Activated T-helper 2 cell treated with anti-CD3 and anti-CD28 coated beads, Interferon-gamma antibody, Interleukin-2, Interleukin-4, amounts not matched to agents 10 μg/mL and 5 μg/mL and 100 μg/mL, durations not matched to agents 14 hours and 24 hours and 36 hours (primary cell): ENCODE measurements at regions of chr6 and their contacts with region 1.

Region 1: GRCh38 chr6:137866914-137867684 is at the start of gene TNFAIP3:
- DNase-seq: peak; percentile 94
- H3K4me3 Mint-ChIP-seq: peak within 1 kb of the TSS; percentile 96
- H3K27ac Mint-ChIP-seq: peak within 1 kb of the TSS; percentile 96
- H3K4me1 Mint-ChIP-seq: peaks cover 38% of the 10 kb centered on the region
- H3K27me3 Mint-ChIP-seq: no peaks in the 10 kb centered on the region
- total RNA-seq, gene TNFAIP3: 250 and 251 TPM in 2 replicates

Region 2: GRCh38 chr6:137799950-137800568 is 67.0 kb before region 1 on chr6:
- intact Hi-C with region 1: loop called (anchors 1 kb)
- DNase-seq: no peak
- H3K4me3 Mint-ChIP-seq: no peak overlapping the region
- H3K27ac Mint-ChIP-seq: peak overlapping the region; percentile 76
- H3K4me1 Mint-ChIP-seq: peaks cover 65% of the 10 kb centered on the region
- H3K27me3 Mint-ChIP-seq: no peaks in the 10 kb centered on the region

Region 3: DNA sequence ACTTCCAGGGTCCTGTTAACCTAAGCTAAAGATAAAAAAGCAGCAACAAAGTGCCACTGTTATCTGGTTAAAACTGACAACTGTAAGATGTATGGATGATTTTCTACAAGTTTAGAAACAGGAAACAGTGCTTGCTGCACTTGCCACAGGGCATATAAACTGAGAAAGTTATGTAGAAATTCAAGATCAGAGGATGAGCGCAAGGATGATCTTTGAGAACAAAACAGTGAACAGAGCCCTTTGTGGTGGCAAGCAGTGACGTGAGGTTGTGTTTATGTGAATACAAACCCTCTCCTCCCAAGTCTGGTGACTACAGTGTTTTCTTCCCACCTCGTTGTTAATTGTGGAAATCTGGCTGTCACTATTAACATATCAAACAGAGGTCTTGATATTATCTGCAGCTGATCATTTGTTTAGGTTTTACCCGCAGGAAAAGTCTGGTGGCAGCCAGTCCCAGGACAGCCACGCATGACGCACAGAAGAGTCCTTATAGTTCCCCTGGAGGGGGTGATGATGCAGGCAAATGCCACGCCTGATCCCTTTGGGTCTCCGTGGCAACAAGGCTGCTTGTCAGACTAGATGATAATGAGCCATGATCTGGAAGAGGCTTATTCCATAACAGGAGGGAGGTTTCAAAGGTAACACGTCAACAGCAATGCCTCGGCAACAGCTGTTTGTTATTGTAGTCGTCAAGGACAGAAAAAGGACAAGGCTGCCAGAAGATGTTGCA is 43.1 kb before region 1 on chr6:
- intact Hi-C with region 1: loop called (anchors 1 kb)
- DNase-seq: peak; percentile 70
- H3K4me3 Mint-ChIP-seq: peak overlapping the region; percentile 81
- H3K27ac Mint-ChIP-seq: peak overlapping the region; percentile 96
- H3K4me1 Mint-ChIP-seq: peaks cover 80% of the 10 kb centered on the region
- H3K27me3 Mint-ChIP-seq: no peaks in the 10 kb centered on the region

Region 4: DNA sequence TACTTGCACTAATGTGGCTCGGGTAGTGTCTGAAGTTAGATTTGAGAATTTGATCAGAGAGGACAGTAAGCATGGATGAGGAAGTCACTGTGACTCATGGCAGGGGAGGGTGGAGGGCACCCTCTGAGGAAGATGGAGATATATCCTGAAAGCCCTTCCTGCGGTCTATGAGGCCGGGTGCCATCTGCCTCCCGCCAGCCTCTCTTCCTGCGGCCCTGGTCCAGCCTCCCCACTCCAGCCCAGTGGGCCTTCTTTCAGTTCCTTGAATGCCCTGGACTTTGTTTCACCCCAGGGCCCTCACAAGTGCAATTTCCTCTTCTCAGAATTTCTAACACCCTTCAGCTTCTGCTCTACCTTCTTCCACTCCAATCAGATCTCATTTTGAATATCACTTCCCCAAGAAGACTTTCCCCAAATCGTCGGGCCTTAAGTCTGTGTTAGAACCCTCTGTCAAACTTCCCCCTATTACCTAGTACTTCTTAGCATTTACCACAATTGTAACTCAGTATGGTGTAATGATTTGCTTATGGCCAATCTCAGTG is 20.3 kb before region 1 on chr6:
- intact Hi-C with region 1: loop called (anchors 1 kb)
- DNase-seq: no peak
- H3K4me3 Mint-ChIP-seq: no peak overlapping the region
- H3K27ac Mint-ChIP-seq: no peak overlapping the region
- H3K4me1 Mint-ChIP-seq: peaks cover 19% of the 10 kb centered on the region
- H3K27me3 Mint-ChIP-seq: no peaks in the 10 kb centered on the region

Region 5: GRCh38 chr6:137975188-137975940 is 108.3 kb after region 1 on chr6:
- intact Hi-C with region 1: loop called (anchors 1 kb)
- DNase-seq: peak; percentile 26
- H3K4me3 Mint-ChIP-seq: peak overlapping the region; percentile 72
- H3K27ac Mint-ChIP-seq: peak overlapping the region; percentile 93
- H3K4me1 Mint-ChIP-seq: peaks cover 57% of the 10 kb centered on the region
- H3K27me3 Mint-ChIP-seq: no peaks in the 10 kb centered on the region

Region 6: GRCh38 chr6:138031850-138032249 is 164.8 kb after region 1 on chr6:
- intact Hi-C with region 1: no loop called
- DNase-seq: no peak
- H3K4me3 Mint-ChIP-seq: no peak overlapping the region
- H3K27ac Mint-ChIP-seq: no peak overlapping the region
- H3K4me1 Mint-ChIP-seq: no peaks in the 10 kb centered on the region
- H3K27me3 Mint-ChIP-seq: peaks cover 16% of the 10 kb centered on the region

Region 7: DNA sequence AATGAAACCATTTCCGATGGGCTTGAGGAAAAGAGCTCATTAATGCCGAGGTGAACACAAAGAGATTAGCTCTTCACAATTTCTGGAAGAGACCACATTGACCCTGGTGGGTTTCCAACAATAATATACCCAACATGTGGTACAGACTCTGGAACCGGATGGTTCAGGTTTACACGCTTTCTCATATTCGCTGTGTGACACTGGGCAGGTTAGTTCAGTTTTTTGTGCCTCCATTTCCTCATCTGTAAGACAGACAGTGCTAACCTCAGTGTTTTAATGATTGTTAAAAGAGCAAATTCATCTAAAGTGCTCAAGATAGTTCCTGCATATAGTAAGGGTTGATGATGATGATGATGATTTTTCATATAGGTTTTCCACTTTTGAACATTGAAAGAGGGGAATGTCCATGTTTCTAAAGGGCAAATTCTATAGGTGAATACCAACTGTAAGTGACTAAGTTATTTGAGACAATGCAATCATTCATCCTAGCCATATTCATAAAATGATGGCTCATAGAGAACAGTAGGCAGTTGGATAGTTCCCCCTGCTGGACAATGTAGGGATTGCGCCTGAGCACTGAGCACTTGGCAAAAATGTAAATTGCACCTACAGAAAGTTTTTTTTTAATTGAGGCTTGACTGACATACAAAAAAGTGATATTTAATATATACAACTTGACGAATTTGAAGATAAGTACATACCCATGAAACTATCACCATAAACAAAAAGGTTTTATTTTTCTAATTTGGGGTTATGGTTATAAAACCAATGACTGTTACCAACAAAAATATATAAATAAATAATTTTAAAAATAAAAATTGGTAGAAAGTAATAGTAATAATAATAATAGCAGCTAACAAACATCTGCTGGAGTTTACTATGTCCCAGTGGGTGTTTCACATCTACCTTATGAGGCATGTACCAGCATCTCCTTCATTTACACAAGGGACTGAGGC is 242.2 kb after region 1 on chr6:
- intact Hi-C with region 1: loop called (anchors 5 kb)
- DNase-seq: peak; percentile 65
- H3K4me3 Mint-ChIP-seq: peak overlapping the region; percentile 11
- H3K27ac Mint-ChIP-seq: no peak overlapping the region
- H3K4me1 Mint-ChIP-seq: peaks cover 26% of the 10 kb centered on the region
- H3K27me3 Mint-ChIP-seq: peaks cover 36% of the 10 kb centered on the region